CD4-positive, alpha-beta T cell (primary cell): ENCODE measurements at regions of chr19 and their contacts with region 1.

Region 1: GRCh38 chr19:42244347-42245220 is 2.2 kb upstream of the GSK3A start:
- DNase-seq: peak; percentile 82 to 96 (median 88)
- ATAC-seq: peak; percentile 41
- H3K4me3 ChIP-seq: peak overlapping the region; percentile 83
- H3K4me3 Mint-ChIP-seq: peak overlapping the region; percentile 95
- H3K27ac ChIP-seq: peak overlapping the region; percentile 71 to 95
- H3K27ac Mint-ChIP-seq: peak overlapping the region; percentile 81
- H3K4me1 ChIP-seq: peaks cover 50% of the 10 kb centered on the region
- H3K4me1 Mint-ChIP-seq: peaks cover 46% of the 10 kb centered on the region
- H3K27me3 ChIP-seq: no peaks in the 10 kb centered on the region
- H3K27me3 Mint-ChIP-seq: no peaks in the 10 kb centered on the region
- CTCF ChIP-seq: peak; percentile 73

Region 2: GRCh38 chr19:42092350-42092749 is 152.2 kb before region 1 on chr19:
- CTCF ChIA-PET with region 1: no interaction called
- POLR2A ChIA-PET with region 1: no interaction called
- intact Hi-C with region 1: no loop called
- DNase-seq: peak in 10 of 14 experiments; percentile 14 to 68 (median 38)
- ATAC-seq: peak; percentile 64
- H3K4me3 ChIP-seq: no peak overlapping the region
- H3K4me3 Mint-ChIP-seq: no peak overlapping the region
- H3K27ac ChIP-seq: no peak overlapping the region
- H3K27ac Mint-ChIP-seq: peak overlapping the region; percentile 32
- H3K4me1 ChIP-seq: peaks cover 25% of the 10 kb centered on the region
- H3K4me1 Mint-ChIP-seq: peaks cover 18% of the 10 kb centered on the region
- H3K27me3 ChIP-seq: no peaks in the 10 kb centered on the region
- H3K27me3 Mint-ChIP-seq: no peaks in the 10 kb centered on the region
- CTCF ChIP-seq: peak; percentile 47

Region 3: DNA sequence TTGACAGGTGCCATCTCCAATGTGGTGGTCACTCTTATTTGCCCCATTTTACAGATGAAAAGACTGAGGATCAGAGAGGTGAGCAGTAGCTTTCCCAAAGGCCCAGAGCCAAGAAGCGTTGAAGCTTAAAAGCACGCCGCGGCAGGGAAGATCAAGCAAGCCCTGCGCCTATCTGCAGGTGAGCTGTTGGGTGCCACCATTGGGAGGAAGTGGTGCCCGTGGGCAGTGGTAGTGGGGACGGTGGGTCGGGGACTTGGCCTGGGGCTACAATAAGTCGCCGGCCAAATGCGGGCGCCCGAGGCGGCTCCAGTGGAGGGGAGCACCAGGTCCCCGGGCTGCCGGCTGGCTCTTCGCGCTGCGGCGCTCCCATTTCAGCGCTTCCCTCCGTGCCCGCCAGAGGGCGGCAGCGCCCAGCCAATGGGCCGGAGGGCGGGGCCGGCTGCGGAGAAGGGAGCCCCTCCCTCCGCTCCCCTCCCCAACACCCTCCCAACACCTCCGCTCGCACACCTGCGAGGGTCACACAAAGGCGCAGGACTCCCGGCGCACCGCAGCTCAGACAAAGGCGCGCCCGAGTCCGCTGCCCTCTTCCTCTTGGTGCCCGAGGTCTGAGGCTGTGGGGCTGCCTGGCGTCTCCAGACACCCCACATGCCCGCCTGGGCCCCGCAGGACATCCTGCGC is 111.6 kb before region 1 on chr19:
- CTCF ChIA-PET with region 1: interaction called, 4 read pairs
- POLR2A ChIA-PET with region 1: interaction called, 7 read pairs
- intact Hi-C with region 1: loop called (anchors 2 kb)
- DNase-seq: peak; percentile 71 to 92 (median 84)
- ATAC-seq: peak; percentile 72
- H3K4me3 ChIP-seq: peak overlapping the region; percentile 63
- H3K4me3 Mint-ChIP-seq: peak overlapping the region; percentile 89
- H3K27ac ChIP-seq: peak overlapping the region; percentile 71 to 76
- H3K27ac Mint-ChIP-seq: peak overlapping the region; percentile 71
- H3K4me1 ChIP-seq: peaks cover 78% of the 10 kb centered on the region
- H3K4me1 Mint-ChIP-seq: peaks cover 72% of the 10 kb centered on the region
- H3K27me3 ChIP-seq: no peaks in the 10 kb centered on the region
- H3K27me3 Mint-ChIP-seq: no peaks in the 10 kb centered on the region
- CTCF ChIP-seq: peak; percentile 97

Region 4: GRCh38 chr19:42199440-42200115 is 45.0 kb before region 1 on chr19:
- CTCF ChIA-PET with region 1: interaction called, 8 read pairs
- POLR2A ChIA-PET with region 1: interaction called, 35 read pairs
- intact Hi-C with region 1: loop called in 1 of 2 experiments (anchors 1 kb)
- DNase-seq: peak in 10 of 14 experiments; percentile 28 to 89 (median 56)
- ATAC-seq: peak; percentile 47
- H3K4me3 ChIP-seq: peak overlapping the region; percentile 57
- H3K4me3 Mint-ChIP-seq: peak overlapping the region; percentile 83
- H3K27ac ChIP-seq: peak overlapping the region; percentile 89 to 94
- H3K27ac Mint-ChIP-seq: peak overlapping the region; percentile 93
- H3K4me1 ChIP-seq: peaks cover 95% of the 10 kb centered on the region
- H3K4me1 Mint-ChIP-seq: peaks cover 83% of the 10 kb centered on the region
- H3K27me3 ChIP-seq: no peaks in the 10 kb centered on the region
- H3K27me3 Mint-ChIP-seq: no peaks in the 10 kb centered on the region
- CTCF ChIP-seq: peak; percentile 10

Region 5: GRCh38 chr19:42233106-42233505 is 11.5 kb before region 1 on chr19:
- CTCF ChIA-PET with region 1: interaction called, 7 read pairs
- POLR2A ChIA-PET with region 1: interaction called, 13 read pairs
- intact Hi-C with region 1: no loop called
- DNase-seq: no peak
- ATAC-seq: no peak
- H3K4me3 ChIP-seq: no peak overlapping the region
- H3K4me3 Mint-ChIP-seq: no peak overlapping the region
- H3K27ac ChIP-seq: no peak overlapping the region
- H3K27ac Mint-ChIP-seq: peak overlapping the region; percentile 20
- H3K4me1 ChIP-seq: peaks cover 15% of the 10 kb centered on the region
- H3K4me1 Mint-ChIP-seq: peaks cover 16% of the 10 kb centered on the region
- H3K27me3 ChIP-seq: no peaks in the 10 kb centered on the region
- H3K27me3 Mint-ChIP-seq: no peaks in the 10 kb centered on the region
- CTCF ChIP-seq: no peak

Region 6: DNA sequence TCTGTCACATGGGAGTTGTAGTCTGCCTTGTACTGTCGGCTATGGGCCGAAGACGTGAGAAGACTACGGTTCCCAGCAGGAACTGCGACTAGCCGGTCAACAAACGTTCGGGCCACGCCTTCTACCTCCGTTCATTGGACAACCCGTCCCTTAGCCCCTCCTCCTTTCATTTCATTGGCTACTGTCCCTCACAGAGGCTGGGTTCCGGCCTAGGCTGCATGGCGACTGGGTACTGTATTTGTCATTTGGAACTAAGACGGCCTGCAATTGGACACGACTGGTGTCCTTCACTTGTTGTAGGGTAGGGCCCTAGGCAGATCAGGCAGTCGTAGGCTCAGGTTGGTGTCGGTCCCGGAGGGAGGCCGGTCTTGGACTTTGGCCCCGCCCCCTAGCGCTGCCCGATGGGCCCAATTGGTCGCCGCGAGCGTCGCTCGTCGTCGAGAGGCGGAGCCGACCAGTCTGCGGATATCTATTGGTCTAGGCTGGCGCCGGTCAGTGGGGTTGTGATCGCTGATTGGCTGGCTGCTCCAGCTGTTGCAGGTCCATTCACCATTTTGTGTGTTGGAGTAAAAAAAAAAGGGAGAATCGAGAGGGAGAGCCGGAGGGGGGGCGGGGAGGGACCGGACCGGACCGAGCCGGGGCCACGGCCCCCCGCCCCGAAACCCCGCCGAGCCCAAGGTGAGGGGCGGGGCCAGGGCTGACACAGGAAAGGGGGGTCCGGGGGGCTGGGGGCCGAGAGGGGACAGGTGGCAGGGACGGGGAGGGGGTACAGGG is 24.3 kb after region 1 on chr19 and contains the start of gene CIC:
- CTCF ChIA-PET with region 1: interaction called, 13 read pairs
- POLR2A ChIA-PET with region 1: interaction called, 59 read pairs
- intact Hi-C with region 1: loop called (anchors 1 kb)
- DNase-seq: peak; percentile 98 to 100 (median 99)
- ATAC-seq: peak; percentile 74
- H3K4me3 ChIP-seq: peak within 1 kb of the TSS; percentile 70
- H3K4me3 Mint-ChIP-seq: peak within 1 kb of the TSS; percentile 92
- H3K27ac ChIP-seq: peak within 1 kb of the TSS; percentile 98 to 99
- H3K27ac Mint-ChIP-seq: no peak within 1 kb of the TSS
- H3K4me1 ChIP-seq: peaks cover 37% of the 10 kb centered on the region
- H3K4me1 Mint-ChIP-seq: peaks cover 22% of the 10 kb centered on the region
- H3K27me3 ChIP-seq: no peaks in the 10 kb centered on the region
- H3K27me3 Mint-ChIP-seq: no peaks in the 10 kb centered on the region
- CTCF ChIP-seq: no peak
- total RNA-seq, gene CIC: 114 to 119 TPM

Region 7: DNA sequence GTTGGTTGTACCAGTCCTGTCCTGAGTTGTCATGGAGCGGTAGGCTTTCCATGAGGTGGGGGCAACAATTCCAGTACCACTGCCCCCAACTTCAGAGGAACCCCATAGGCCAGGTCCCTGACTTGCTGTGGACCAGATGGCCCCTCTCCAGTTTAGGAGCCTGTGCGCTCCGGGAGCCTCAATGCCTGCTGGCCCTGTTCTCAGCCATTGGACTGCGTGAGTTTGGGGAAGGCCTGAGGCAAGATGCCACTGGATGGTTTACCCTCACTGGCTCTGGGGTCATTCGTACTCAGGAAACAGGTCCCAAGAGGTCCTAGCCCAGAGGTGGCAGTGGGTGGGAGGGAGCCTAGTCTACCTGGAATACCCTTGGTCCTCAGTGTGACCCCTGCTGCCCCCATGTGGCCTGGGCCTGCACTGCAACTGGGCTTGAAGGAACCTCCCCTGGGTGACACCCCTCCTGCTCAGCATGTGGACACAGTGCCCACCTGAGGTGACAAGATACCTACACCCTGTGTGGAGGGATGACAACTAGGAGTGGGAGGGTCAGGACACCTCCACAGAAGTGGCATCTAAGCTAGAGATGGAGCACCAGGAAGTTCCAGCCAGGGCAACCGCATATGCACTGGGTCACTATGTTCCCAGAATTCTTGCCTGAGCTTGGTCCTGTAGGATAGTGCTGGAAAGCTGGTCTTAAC is 51.4 kb after region 1 on chr19:
- CTCF ChIA-PET with region 1: interaction called, 11 read pairs
- POLR2A ChIA-PET with region 1: interaction called, 3 read pairs
- intact Hi-C with region 1: no loop called
- DNase-seq: peak; percentile 85 to 95 (median 88)
- ATAC-seq: peak; percentile 95
- H3K4me3 ChIP-seq: no peak overlapping the region
- H3K4me3 Mint-ChIP-seq: peak overlapping the region; percentile 54
- H3K27ac ChIP-seq: no peak overlapping the region
- H3K27ac Mint-ChIP-seq: peak overlapping the region; percentile 28
- H3K4me1 ChIP-seq: peaks cover 24% of the 10 kb centered on the region
- H3K4me1 Mint-ChIP-seq: peaks cover 15% of the 10 kb centered on the region
- H3K27me3 ChIP-seq: no peaks in the 10 kb centered on the region
- H3K27me3 Mint-ChIP-seq: no peaks in the 10 kb centered on the region
- CTCF ChIP-seq: peak; percentile 98